Cardiac septum (tissue), 1 donor: ENCODE measurements at regions of chr1 and their contacts with region 1.

Region 1: GRCh38 chr1:176691251-176692228 is 228.6 kb downstream of the PAPPA2 start:
- DNase-seq: no peak

Region 2: DNA sequence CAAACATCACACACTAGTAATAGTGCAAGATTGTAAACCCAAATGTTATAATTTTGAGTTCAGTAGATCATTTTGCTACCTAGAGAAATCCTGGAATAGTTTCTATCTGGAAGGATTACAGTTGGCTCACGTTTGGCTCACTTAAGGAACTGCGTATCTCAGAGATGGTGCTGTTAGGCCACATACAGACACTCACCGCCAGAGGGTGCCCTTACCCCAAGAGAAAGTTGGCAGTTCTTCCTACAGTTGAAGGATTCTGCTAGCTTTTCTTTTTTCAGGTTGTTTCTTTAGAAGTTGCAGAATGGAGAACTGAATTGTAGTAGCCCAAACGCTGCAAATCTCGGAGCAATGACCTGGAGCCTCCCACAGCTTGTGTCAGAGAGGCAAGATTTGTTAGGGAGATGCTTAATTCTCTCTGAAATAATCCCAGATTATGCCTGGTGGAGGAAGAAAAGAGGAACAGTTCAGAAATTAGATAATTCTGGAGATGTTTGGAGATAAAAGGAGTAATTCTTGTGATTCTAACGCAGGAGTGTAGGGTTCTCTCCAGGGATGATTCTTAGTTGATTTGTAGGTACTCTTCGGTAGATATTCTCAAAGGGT is 316.5 kb before region 1 on chr1:
- intact Hi-C with region 1: loop called (anchors 10 kb)
- DNase-seq: peak; percentile 77

Region 3: GRCh38 chr1:176559878-176560277 is 131.7 kb before region 1 on chr1:
- intact Hi-C with region 1: loop called (anchors 1 kb)
- DNase-seq: no peak

Region 4: GRCh38 chr1:176656257-176656995 is 35.1 kb before region 1 on chr1:
- intact Hi-C with region 1: loop called (anchors 1 kb)
- DNase-seq: no peak

Region 5: DNA sequence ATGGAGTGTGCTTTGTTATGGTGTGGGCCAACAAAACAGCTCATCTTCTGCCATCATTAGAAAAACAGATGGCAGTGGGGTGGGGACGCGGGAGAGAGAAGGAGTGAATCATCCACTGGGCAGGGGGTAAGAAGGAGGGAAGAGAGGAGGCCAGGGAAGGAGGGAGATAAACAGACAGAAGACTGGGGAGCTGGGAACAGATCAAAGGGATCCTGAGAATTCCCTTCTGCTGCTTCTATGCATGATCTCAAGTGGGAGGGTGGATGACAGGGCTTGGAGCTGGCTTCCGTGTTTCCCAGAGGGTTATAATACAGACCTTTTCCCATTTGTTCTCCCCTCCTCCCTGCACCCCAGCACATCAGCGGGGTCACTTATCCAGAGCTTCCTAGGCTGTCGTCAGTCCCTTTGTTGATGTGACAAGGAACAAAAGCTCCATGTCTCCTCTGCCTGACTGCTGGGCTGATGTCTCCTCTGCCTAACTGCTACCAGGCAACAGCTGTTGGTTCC is 110.0 kb after region 1 on chr1:
- intact Hi-C with region 1: loop called (anchors 5 kb)
- DNase-seq: no peak

Region 6: DNA sequence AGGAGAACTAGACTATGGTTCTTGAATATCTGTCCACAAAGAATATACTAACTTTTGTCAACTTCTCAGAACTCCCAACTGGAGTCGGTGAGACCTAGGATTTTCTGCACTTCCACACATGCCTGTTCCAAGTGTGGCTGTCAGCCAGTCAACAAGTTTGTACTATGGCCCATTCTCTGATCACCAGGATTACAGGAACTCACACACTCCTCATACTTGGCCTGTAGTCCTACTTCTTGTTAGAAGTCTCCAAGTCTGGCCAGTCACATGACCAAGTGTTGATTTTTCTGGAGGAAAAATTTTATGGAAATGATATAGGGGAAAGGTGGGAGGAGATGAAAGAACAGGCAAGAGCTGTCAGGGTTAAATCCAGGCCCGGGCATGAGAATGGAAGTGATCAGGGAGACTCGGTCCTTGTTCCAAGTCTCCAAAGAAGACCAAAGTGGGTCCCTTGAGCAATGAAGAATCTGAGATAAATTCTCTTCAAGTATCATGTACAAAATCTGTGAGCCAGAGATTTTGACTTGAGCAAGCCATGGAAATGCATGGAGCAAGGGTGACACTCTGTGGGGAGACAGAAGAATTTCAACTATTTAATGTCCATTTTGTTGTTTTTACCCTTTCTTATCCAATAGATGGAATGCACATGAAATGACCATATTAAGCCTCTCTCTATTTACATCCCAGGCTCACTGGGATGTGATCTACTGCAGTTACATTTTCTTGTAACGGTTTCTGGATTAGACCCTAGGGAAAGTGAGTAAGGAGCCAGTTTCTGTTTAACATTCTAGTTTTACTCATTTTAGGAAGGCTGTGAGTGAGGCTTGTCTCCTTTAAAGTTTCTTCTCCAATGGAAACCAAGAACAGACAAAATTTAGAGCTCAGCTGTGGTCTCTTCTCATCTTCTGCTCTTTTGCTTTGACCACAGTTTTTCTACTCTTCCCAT is 152.1 kb after region 1 on chr1:
- intact Hi-C with region 1: loop called (anchors 2 kb)
- DNase-seq: no peak

Region 7: GRCh38 chr1:176880954-176881595 is 189.5 kb after region 1 on chr1:
- intact Hi-C with region 1: loop called (anchors 2 kb)
- DNase-seq: no peak